Heart left ventricle (tissue), 16 donors: ENCODE measurements at regions of chr11 and their contacts with region 1.

Region 1: DNA sequence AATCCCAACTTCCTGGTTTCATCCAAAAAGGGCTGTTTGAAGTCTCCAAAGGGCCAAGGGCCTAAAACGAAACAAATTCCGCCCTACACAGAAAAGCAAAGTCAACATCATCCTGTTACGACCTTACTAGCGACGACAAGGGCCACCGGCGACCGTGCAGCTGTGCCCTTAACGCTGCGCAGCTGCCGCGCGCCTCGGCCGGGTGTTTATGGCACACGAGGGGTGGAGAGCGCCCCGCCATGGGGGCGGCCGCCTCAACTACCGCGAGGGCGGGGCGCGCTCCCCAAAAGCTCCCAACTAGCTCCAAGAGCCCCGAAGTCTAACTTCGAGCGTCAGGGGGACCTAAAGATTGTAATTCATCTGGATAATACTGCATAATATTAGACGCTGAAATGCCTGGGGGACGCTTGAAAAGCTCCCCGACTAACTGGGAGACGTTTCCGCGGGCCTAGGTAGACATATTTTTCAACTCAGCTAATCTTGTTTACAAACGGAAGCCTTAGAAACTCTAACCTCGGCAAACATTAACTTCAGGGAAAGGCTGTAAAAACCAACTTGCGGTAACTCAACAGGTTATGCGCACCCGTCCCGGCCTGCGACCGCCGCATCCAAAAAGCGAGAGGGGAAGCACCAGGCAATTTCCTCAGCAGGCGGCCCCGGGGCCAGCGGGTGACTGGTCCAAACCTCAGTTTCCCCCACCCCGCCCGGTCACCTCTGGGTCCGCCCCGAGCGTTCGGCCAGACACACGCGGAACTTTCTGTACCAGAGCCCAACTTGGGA is 694 bp downstream of the TMEM123 start:
- DNase-seq: peak; percentile 55 to 81 (median 64)
- ATAC-seq: peak; percentile 63 to 87 (median 76)
- H3K4me3 ChIP-seq: peak overlapping the region; percentile 69 to 96 (median 84)
- H3K27ac ChIP-seq: peak overlapping the region; percentile 6 to 94 (median 85)
- H3K4me1 ChIP-seq: peaks cover 0 to 64% (median 18%) of the 10 kb centered on the region in 12 donors
- H3K27me3 ChIP-seq: no peaks in the 10 kb centered on the region
- CTCF ChIP-seq: peak in 5 of 12 donors; percentile 10 to 43 (median 25)
- POLR2A ChIP-seq: no peak

Region 2: DNA sequence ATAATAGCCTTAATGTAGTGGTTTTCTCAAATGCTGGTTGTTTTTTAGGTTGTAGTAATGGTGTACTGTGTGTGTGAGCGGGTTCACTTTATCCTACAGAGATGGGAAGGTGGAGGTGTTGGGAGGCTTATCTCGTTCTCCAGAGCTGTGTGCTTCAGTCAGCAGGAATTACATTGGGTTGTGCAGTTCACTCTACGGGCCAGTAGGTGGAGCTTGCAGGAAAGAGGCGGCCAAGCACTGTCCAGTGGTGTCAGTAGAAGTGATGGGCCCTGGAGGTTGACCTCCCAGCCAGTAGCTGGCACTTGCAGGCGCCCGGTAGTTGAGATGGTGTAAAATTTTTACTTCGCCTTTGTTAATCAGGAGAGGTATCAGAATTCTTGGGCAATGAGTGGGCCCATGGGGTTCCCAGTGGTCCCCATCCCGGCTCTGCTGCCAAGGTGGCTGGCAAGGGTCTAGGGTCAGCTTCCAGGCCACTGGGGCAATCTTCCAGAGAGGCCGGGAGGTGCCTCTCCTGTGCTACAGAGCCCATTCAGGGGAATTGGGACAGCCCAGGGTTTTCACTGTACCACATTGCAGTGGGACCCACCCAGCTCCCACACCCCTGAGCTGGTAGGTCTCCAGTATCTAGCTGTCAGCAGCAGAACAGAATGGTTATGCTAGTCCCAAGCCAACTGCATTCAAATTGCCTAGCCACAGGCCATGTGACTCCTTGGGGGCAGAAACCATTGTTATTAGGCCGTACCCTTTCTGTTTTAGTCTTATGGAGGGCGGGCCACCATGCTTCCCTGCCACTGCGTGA is 61.0 kb before region 1 on chr11:
- intact Hi-C with region 1: loop called in 2 of 10 experiments (anchors 5 kb)
- DNase-seq: peak; percentile 47 to 72 (median 64)
- ATAC-seq: peak; percentile 52 to 93 (median 86)
- H3K4me3 ChIP-seq: no peak overlapping the region
- H3K27ac ChIP-seq: no peak overlapping the region
- H3K4me1 ChIP-seq: peaks cover 0 to 2% (median 0%) of the 10 kb centered on the region in 12 donors
- H3K27me3 ChIP-seq: no peaks in the 10 kb centered on the region
- CTCF ChIP-seq: peak; percentile 70 to 87 (median 82)
- POLR2A ChIP-seq: no peak